Activated CD4-positive, alpha-beta T cell treated with anti-CD3 and anti-CD28 coated beads for 36 hours (primary cell): ENCODE measurements at regions of chr5 and their contacts with region 1.

Region 1: GRCh38 chr5:178058321-178059012 is 54.9 kb upstream of the N4BP3 start:
- DNase-seq: no peak
- ATAC-seq: no peak
- H3K4me3 Mint-ChIP-seq: no peak overlapping the region
- H3K27ac Mint-ChIP-seq: no peak overlapping the region
- H3K4me1 Mint-ChIP-seq: peaks cover 4% of the 10 kb centered on the region
- H3K27me3 Mint-ChIP-seq: no peaks in the 10 kb centered on the region

Region 2: GRCh38 chr5:177607452-177608192 is 450.8 kb before region 1 on chr5:
- CTCF ChIA-PET with region 1: no interaction called
- POLR2A ChIA-PET with region 1: no interaction called
- intact Hi-C with region 1: loop called in 1 of 2 experiments (anchors 1 kb)
- DNase-seq: peak; percentile 82
- ATAC-seq: peak; percentile 92
- H3K4me3 Mint-ChIP-seq: no peak overlapping the region
- H3K27ac Mint-ChIP-seq: no peak overlapping the region
- H3K4me1 Mint-ChIP-seq: peaks cover 13% of the 10 kb centered on the region
- H3K27me3 Mint-ChIP-seq: no peaks in the 10 kb centered on the region

Region 3: DNA sequence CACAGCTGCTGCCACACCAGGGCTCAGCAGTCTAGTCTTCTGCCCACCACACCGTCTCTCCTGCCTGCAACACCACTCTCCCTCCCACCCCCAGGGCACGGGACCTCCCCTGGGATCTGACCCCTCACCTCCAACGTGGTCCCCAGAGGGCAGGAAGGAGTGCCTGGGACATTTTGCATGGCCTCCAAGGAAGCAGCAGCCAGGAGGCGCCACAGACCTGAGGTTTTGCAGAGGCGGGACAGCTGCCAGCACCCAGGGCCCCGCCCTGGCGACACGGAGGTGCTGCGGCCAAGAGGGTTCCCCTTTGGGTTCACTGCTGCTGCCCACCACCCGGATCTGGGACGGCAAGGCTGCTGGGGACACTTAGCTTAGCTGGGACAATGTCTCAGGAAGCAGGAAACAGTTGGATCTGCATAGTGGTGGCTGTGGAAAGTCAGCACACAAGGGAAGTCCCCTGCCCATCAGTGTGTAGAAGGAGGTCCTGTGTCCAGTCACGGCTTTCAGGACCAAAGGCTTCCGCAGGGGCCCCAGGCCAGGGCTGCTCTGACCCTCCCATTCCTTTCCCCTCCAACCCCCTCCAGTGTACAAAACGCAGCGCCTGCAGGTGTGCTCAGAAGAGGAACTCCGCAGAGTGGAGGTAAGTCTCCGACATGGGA is 76.3 kb before region 1 on chr5:
- CTCF ChIA-PET with region 1: no interaction called
- POLR2A ChIA-PET with region 1: no interaction called
- intact Hi-C with region 1: loop called in 1 of 2 experiments (anchors 1 kb)
- DNase-seq: peak; percentile 69
- ATAC-seq: peak; percentile 72
- H3K4me3 Mint-ChIP-seq: no peak overlapping the region
- H3K27ac Mint-ChIP-seq: no peak overlapping the region
- H3K4me1 Mint-ChIP-seq: peaks cover 6% of the 10 kb centered on the region
- H3K27me3 Mint-ChIP-seq: peaks cover 46% of the 10 kb centered on the region